ENCODE measurements at regions of chr20 and their contacts with region 1.

Region 1: GRCh38 chr20:354298-355064 is 7.6 kb downstream of the NRSN2 start:
- DNase-seq: peak; percentile 61 to 86 (median 75)
- H3K4me3 ChIP-seq: no peak overlapping the region
- H3K4me3 Mint-ChIP-seq: no peak overlapping the region
- H3K27ac ChIP-seq: no peak overlapping the region
- H3K27ac Mint-ChIP-seq: peak overlapping the region in 1 of 8 donors; percentile 14
- H3K4me1 ChIP-seq: peaks cover 3% of the 10 kb centered on the region
- H3K4me1 Mint-ChIP-seq: no peaks in the 10 kb centered on the region
- H3K27me3 ChIP-seq: no peaks in the 10 kb centered on the region
- H3K27me3 Mint-ChIP-seq: peaks cover 6 to 10% of the 10 kb centered on the region in 2 donors

Region 2: GRCh38 chr20:152131-152530 is 202.3 kb before region 1 on chr20:
- CTCF ChIA-PET with region 1: no interaction called
- POLR2A ChIA-PET with region 1: no interaction called
- DNase-seq: no peak
- H3K4me3 ChIP-seq: no peak overlapping the region
- H3K4me3 Mint-ChIP-seq: no peak overlapping the region
- H3K27ac ChIP-seq: no peak overlapping the region
- H3K27ac Mint-ChIP-seq: no peak overlapping the region
- H3K4me1 ChIP-seq: no peaks in the 10 kb centered on the region
- H3K4me1 Mint-ChIP-seq: no peaks in the 10 kb centered on the region
- H3K27me3 ChIP-seq: peaks cover 5% of the 10 kb centered on the region
- H3K27me3 Mint-ChIP-seq: peaks cover 21 to 40% of the 10 kb centered on the region in 2 donors

Region 3: GRCh38 chr20:478949-479429 is 124.5 kb after region 1 on chr20:
- CTCF ChIA-PET with region 1: interaction called, 46 read pairs
- POLR2A ChIA-PET with region 1: no interaction called
- DNase-seq: peak in 2 of 5 donors; percentile 61
- H3K4me3 ChIP-seq: no peak overlapping the region
- H3K4me3 Mint-ChIP-seq: no peak overlapping the region
- H3K27ac ChIP-seq: no peak overlapping the region
- H3K27ac Mint-ChIP-seq: peak overlapping the region in 4 of 8 donors; percentile 0 to 91 (median 12)
- H3K4me1 ChIP-seq: peaks cover 6% of the 10 kb centered on the region
- H3K4me1 Mint-ChIP-seq: peaks cover 17 to 33% (median 24%) of the 10 kb centered on the region in 3 donors
- H3K27me3 ChIP-seq: no peaks in the 10 kb centered on the region
- H3K27me3 Mint-ChIP-seq: no peaks in the 10 kb centered on the region

Region 4: GRCh38 chr20:645318-646106 is 291.0 kb after region 1 on chr20:
- CTCF ChIA-PET with region 1: interaction called, 14 read pairs
- POLR2A ChIA-PET with region 1: no interaction called
- DNase-seq: peak; percentile 43 to 68 (median 51)
- H3K4me3 ChIP-seq: no peak overlapping the region
- H3K4me3 Mint-ChIP-seq: peak overlapping the region in 1 of 7 donors; percentile 15
- H3K27ac ChIP-seq: no peak overlapping the region
- H3K27ac Mint-ChIP-seq: peak overlapping the region in 1 of 8 donors; percentile 43
- H3K4me1 ChIP-seq: peaks cover 7% of the 10 kb centered on the region
- H3K4me1 Mint-ChIP-seq: peaks cover 16 to 39% (median 27%) of the 10 kb centered on the region in 3 donors
- H3K27me3 ChIP-seq: peaks cover 7% of the 10 kb centered on the region
- H3K27me3 Mint-ChIP-seq: peaks cover 18 to 24% of the 10 kb centered on the region in 2 donors